Vagina (tissue), 2 donors: ENCODE measurements at regions of chr2 and their contacts with region 1.

Region 1: DNA sequence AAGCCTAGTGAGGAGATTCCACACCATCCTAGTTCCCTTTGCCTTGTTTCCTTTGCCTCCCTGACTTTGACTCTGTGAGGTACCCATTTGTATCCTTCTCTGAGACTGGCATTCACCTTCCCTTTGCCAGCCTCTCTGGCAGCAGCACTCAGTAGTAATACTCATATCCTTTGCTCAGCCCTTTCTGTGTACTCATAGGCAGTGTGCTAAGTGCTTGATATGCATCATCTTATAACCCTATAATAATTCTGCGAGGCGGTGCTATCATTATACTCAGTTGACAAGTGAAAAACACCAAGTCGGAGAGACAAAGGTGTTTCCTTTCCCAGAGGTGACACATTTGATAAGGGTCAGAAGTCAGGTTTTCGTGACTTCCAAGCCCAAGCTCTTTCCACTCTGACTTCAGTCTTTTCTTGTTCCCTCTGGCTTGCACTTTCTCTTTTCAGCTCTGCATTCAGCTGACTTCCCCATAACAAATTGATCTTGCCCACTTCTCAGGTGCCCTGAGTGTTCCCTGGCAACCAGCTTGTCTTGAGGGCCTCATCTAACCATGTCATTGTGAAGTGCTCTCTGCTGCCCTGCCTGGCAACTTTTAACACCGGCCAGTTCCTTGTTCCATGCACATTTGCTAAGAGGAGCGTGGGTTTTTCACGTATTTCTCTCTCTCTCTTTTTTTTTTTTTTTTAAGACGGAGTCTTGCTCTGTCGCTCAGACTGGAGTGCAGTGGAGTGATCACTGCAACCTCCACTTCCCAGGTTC is 94.5 kb upstream of the UPP2 start:
- DNase-seq: no peak
- H3K4me3 ChIP-seq: no peak overlapping the region
- H3K27ac ChIP-seq: no peak overlapping the region
- H3K4me1 ChIP-seq: no peaks in the 10 kb centered on the region
- H3K27me3 ChIP-seq: no peaks in the 10 kb centered on the region
- CTCF ChIP-seq: no peak
- POLR2A ChIP-seq: no peak

Region 2: GRCh38 chr2:157302492-157303099 is 704.5 kb before region 1 on chr2:
- intact Hi-C with region 1: loop called (anchors 10 kb)
- DNase-seq: no peak
- H3K4me3 ChIP-seq: no peak overlapping the region
- H3K27ac ChIP-seq: no peak overlapping the region
- H3K4me1 ChIP-seq: no peaks in the 10 kb centered on the region
- H3K27me3 ChIP-seq: no peaks in the 10 kb centered on the region
- CTCF ChIP-seq: peak; percentile 26 to 75 (median 56)
- POLR2A ChIP-seq: no peak

Region 3: DNA sequence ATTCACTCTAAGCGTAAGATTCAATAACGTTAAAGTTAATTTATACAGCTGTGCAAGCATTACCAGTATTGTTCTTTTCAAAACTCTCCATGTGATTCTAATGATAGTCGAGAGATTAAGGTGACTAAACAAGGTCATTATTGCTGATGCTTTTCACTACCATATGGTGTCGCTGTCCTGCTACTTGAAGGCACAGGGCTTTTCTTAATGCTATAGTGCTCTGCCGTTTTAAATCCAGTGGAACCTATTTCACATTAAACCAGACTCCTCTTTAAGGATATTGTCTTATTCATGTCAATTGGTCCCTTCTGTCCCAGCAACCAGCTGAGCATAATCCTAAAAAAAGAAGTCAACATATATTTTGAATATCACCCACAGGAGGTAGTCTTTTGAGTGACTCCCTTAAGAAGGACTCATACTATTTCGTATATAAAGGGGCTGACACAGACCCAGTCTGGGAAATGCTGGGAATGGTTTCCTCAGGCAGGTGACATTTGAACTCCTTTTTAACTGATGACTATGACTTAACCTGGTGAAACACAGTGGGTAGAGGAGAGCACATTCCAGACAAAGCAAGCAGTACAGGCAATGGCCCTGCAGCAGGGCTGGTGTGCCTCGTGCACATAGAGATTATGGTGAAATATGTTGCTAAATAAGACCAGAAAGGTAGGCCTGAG is 509.4 kb before region 1 on chr2:
- intact Hi-C with region 1: loop called (anchors 5 kb)
- DNase-seq: no peak
- H3K4me3 ChIP-seq: no peak overlapping the region
- H3K27ac ChIP-seq: no peak overlapping the region
- H3K4me1 ChIP-seq: no peaks in the 10 kb centered on the region
- H3K27me3 ChIP-seq: no peaks in the 10 kb centered on the region
- CTCF ChIP-seq: peak in 1 of 3 experiments; percentile 25
- POLR2A ChIP-seq: no peak

Region 4: DNA sequence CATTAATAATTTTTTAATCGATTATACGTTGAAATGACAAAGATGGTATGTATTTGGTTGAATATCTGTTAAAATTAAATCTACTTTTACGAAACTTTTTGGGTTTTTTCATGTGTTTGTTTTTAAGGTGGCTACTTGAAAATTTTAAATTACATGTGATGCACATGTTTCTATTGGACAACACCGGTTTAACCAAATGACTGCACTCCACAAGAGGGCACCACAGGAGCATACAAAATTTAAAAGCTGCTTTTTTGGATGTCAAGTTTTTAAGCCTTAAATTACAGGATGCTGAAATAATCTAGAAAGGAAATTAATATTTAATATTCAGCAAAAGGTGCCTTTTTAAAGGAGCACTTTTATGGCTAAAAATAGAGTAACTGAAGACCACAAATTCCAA is 229.7 kb before region 1 on chr2:
- intact Hi-C with region 1: loop called (anchors 5 kb)
- DNase-seq: no peak
- H3K4me3 ChIP-seq: no peak overlapping the region
- H3K27ac ChIP-seq: no peak overlapping the region
- H3K4me1 ChIP-seq: peaks cover 11% of the 10 kb centered on the region
- H3K27me3 ChIP-seq: no peaks in the 10 kb centered on the region
- CTCF ChIP-seq: peak in 2 of 3 experiments; percentile 50 to 69
- POLR2A ChIP-seq: no peak

Region 5: DNA sequence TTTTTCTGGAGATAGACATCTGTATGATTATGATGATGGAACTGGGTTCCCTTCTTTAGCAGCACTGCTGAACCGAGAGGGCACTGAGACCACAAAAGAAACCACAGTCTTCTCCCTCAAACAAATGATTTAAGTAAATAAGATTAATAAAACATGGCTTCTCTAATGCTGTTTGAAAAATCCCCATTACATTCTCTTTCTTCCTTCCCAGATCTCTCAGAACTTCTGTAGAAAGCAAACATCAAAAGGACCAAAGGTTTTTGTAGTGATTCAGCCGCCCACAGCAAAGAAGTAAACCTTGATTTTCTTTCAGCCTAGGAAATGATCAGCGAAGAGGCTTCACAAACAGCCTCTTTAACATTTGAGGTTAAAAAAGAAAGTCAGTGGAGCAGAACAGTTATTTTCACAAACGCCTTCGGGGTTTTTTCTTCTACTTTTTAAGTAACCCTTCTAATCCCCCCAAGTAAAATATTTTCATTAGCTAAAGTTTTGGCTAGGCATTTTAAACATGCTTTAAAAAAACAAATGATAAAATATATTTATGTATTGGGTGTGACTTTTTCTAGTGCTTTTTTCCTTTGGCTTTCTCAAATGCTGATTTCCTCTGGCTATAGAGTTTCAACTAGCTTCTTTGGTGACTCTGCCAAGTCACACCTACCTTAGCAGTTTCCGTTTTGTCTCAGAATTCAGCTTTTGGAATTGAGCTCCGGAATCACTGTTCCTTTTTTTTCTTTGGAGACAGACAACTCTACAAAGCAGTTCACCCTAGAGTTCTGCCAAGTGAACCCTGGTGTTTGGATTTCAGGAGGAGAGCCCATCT is 184.1 kb after region 1 on chr2:
- intact Hi-C with region 1: no loop called
- DNase-seq: no peak
- H3K4me3 ChIP-seq: no peak overlapping the region
- H3K27ac ChIP-seq: peak overlapping the region; percentile 42
- H3K4me1 ChIP-seq: peaks cover 8% of the 10 kb centered on the region
- H3K27me3 ChIP-seq: no peaks in the 10 kb centered on the region
- CTCF ChIP-seq: no peak
- POLR2A ChIP-seq: no peak